Activated T-helper 1 cell treated with anti-CD3 and anti-CD28 coated beads, Interleukin-12 subunit alpha, Interleukin-12 subunit beta, Interleukin-2, Interleukin-4 antibody, amounts not matched to agents 30 ng/mL and 10 ng/mL and 1 ng/mL, durations not matched to agents 14 hours and 24 hours and 36 hours (primary cell): ENCODE measurements at regions of chr3 and their contacts with region 1.

Region 1: DNA sequence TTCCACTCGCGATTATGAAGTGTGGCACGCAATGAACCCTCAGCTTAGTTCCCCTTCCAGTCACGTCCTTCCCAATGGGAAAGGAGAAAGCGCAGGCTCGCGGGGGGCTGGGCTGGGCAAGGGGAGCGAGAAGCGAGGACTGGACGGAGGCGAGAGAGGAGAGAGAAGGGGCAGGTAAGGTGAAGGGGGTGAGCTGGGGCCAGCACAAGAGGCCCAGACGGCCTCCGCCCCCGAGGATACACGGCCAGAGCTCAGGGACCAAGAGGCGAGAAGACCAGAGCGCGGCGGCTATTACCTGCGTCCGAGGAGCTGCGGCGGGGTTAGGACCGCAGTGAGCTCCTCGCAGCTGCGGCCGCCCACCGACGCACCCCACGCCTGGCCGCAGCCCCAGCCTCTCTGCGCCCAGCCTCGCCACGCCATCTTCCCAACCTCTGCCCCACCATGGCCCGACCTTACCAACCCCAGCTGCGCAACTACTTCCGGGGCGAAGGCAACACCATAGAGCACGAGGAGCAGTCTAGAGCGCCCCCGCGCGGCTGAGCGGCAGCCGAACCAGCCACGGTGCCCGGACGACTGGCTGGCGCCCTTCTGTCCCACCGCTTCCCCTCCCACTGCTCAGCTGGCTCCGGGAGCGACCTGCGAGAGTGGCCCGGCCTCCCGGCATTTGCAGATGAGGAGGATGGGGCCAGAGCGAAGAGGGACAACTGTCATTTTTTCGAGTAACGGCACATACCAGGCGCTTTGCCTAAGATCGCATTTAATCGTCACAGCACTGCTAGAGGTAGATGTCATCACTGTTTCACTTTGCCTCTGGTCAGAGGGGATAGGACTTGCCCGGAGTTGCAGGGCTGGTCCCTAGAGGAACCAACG is at the start of gene PARL:
- DNase-seq: peak; percentile 93
- H3K4me3 Mint-ChIP-seq: peak within 1 kb of the TSS; percentile 98
- H3K27ac Mint-ChIP-seq: peak within 1 kb of the TSS; percentile 99
- H3K4me1 Mint-ChIP-seq: peaks cover 35% of the 10 kb centered on the region
- H3K27me3 Mint-ChIP-seq: no peaks in the 10 kb centered on the region
- total RNA-seq, gene PARL: 93.7 and 98.2 TPM in 2 replicates

Region 2: DNA sequence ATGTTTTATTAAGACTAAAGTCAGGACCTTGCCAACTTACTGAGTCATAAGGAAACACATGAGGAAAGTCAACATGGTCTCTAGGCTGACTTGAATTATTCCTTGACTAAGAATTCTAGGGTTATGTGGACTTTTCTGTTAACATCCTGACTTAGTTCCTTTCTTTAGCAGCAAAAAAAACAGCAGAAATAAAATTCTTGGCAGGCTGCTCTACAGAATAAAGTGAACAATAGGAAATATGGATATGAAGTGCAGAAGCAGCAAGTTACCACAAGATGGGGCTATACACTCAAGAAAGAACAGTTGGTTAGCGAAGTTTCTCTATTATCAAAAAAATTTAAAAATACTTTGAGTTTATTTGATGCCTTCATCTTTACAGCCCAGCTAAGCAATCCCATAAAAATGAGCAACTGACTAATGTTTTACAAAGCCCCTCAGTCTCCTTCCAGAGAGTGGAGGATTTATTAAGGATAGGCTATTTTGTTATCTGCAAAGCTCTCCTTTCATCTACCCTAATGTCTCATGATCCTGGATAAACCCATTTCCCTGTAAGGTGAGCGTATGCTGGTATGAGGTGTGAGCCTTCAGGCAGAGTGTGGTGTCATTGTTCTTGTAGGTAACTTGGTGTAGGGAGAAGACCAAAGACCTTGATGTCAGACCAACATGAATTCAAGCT is 762.3 kb before region 1 on chr3:
- intact Hi-C with region 1: loop called (anchors 1 kb)
- DNase-seq: no peak
- H3K4me3 Mint-ChIP-seq: no peak overlapping the region
- H3K27ac Mint-ChIP-seq: no peak overlapping the region
- H3K4me1 Mint-ChIP-seq: peaks cover 12% of the 10 kb centered on the region
- H3K27me3 Mint-ChIP-seq: peaks cover 6% of the 10 kb centered on the region

Region 3: DNA sequence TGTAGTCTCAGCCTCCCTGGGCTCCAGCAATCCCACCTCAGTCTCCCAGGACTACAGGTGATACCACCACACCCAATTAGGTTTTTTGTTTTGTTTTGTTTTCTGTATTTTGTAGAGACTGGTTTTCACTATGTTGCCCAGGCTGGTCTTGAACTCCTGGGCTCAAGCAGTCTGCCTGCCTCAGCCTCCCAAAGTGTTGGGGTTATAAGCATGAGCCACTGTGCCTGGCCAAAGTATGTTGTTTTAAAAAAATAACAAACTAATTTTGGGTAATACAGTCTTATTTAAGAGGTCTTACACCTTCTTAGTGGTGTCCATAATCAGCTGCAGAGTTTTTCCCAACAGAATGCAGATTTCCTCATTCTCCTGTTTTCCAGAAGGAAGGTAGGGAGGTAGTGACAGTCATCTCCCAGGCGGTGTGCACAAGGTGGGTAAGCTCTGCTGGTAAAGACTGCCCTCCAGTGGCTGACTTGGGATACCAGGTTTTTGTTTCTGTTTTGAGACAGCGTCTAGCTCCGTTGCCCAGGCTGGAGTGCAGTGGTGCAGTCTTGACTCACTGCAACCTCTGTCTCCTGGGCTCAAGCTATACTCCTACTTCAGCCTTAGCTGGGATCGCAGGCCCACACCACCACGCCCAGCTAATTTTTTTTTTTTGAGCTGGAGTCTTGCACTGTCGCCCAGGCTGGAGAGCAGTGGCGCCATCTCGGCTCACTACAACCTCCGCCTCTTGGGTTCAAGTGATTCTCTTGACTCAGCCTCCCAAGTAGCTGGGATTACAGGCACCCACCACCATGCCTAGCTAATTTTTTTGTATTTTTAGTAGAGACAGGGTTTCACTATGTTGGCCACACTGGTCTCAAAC is 117.7 kb before region 1 on chr3:
- intact Hi-C with region 1: loop called (anchors 1 kb)
- DNase-seq: peak; percentile 63
- H3K4me3 Mint-ChIP-seq: no peak overlapping the region
- H3K27ac Mint-ChIP-seq: no peak overlapping the region
- H3K4me1 Mint-ChIP-seq: peaks cover 7% of the 10 kb centered on the region
- H3K27me3 Mint-ChIP-seq: no peaks in the 10 kb centered on the region

Region 4: DNA sequence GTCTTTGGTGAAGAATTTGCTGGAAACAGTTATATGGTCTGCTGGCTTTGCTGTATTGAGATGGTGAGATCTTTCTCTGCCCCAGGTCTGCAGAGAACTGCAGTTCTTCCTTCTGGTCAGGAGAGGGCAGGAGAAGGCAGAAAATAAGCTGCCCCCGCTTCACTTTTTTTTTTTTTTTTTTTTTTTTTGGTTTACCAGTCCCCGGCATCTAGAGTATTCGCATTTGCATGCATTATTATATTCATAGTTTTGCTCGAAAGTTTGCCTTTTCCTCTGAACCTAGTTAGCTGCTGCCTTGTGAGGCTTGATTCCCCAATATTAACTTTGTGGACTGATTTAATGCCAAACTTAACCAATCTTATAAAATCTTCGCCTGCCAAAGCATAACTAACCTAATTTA is 10.6 kb after region 1 on chr3:
- intact Hi-C with region 1: loop called (anchors 1 kb)
- DNase-seq: no peak
- H3K4me3 Mint-ChIP-seq: no peak overlapping the region
- H3K27ac Mint-ChIP-seq: no peak overlapping the region
- H3K4me1 Mint-ChIP-seq: peaks cover 6% of the 10 kb centered on the region
- H3K27me3 Mint-ChIP-seq: peaks cover 8% of the 10 kb centered on the region

Region 5: DNA sequence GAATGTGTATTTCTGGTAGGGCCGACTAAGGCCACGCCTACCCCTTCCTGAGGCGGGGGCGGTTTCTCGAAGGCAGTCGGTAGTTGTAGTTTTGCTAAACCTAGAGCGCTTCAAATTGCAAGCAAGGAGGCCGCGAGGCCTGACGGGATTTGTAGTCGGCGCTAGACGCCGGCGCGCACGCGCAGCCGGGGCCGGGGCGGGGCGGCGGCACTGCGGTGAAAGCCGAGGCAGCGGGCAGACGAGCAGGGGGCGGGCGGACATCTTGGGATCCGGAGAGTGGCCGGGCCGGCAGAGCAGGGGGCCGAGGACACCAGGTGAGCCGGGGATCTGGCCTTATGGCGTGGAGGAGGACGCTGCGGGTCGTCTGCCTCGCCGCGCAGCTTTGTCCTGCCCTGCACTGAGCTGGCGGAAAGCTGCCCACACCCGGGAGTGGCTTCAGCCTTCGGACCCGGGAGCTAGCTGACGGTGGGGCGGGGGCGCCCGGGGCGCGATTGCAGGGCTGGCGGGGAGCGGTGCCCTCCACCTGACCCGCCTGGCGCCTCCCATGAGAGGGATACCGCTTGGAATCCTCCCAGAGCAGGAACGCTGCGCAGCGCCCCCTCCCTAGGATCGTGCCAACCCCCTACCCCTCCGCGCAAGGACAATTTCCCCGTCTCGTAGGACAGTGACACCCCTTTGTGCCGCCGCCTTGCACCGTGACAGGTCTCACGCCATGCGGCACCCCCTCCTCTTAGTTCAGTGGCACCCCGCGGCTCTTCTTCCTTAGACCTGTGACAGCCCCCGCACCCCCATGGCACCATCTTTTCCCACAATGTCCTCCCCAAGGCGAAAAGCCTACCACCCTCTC is 290.2 kb after region 1 on chr3 and contains the start of gene AP2M1:
- intact Hi-C with region 1: loop called (anchors 1 kb)
- DNase-seq: peak; percentile 99
- H3K4me3 Mint-ChIP-seq: peak within 1 kb of the TSS; percentile 95
- H3K27ac Mint-ChIP-seq: peak within 1 kb of the TSS; percentile 85
- H3K4me1 Mint-ChIP-seq: peaks cover 28% of the 10 kb centered on the region
- H3K27me3 Mint-ChIP-seq: no peaks in the 10 kb centered on the region
- total RNA-seq, gene AP2M1: 235 and 238 TPM in 2 replicates

Region 6: GRCh38 chr3:184196536-184196935 is 311.9 kb after region 1 on chr3:
- intact Hi-C with region 1: no loop called
- DNase-seq: no peak
- H3K4me3 Mint-ChIP-seq: no peak overlapping the region
- H3K27ac Mint-ChIP-seq: no peak overlapping the region
- H3K4me1 Mint-ChIP-seq: no peaks in the 10 kb centered on the region
- H3K27me3 Mint-ChIP-seq: no peaks in the 10 kb centered on the region

Region 7: DNA sequence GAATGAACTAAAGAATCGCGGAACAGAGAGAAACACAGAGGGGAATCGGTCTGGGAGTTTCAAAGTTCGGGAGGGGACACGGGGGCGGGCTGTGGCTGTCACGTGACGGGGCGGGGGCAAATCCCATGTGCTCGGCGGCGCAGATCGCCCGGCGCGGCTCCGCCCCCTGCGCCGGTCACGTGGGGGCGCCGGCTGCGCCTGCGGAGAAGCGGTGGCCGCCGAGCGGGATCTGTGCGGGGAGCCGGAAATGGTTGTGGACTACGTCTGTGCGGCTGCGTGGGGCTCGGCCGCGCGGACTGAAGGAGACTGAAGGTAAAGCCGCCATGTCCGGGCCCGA is 429.7 kb after region 1 on chr3 and contains the start of gene EIF4G1:
- intact Hi-C with region 1: loop called (anchors 1 kb)
- DNase-seq: peak; percentile 92
- H3K4me3 Mint-ChIP-seq: peak within 1 kb of the TSS; percentile 88
- H3K27ac Mint-ChIP-seq: peak within 1 kb of the TSS; percentile 93
- H3K4me1 Mint-ChIP-seq: peaks cover 29% of the 10 kb centered on the region
- H3K27me3 Mint-ChIP-seq: no peaks in the 10 kb centered on the region
- total RNA-seq, gene EIF4G1: 657 and 706 TPM in 2 replicates